A673 (cell line): ENCODE measurements at regions of chr17 and their contacts with region 1.

Region 1: DNA sequence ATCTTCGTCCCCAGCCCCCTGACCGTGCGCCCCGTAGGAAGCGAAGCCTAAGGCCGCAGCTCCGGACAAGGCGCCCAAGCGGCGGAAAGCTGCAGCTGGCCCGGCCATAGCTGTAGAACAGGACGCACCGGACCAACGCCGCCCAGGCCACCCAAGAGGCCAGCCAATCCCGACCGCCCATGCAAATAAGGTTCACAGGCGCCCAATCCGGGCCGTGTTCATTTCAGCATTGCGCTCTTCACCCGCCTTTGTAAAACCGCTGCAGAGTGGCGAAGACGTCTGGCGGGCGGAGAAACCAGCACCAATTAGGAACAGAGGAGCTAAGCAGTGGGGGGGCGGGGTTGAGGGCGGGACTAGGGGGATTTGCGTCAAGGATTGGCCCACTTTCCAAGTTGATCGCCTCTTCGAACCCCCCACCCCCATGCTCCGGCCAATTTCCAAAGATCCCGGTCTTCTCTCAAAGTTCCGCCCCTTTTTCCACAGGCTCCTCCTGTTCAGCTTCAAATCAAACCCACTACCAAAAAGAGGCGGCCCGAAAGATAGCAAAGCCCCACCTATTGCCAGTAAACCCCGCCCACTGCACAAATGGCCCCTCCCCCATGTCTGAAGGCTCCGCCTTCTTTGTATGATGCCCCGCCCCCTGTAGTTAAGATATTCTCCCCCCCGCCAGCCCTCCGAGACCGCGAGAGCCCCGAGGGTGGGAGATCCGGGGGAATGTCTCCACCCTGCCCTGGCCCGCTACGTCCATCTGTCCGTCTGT is at the start of gene TMEM256:
- DNase-seq: peak; percentile 100
- H3K4me3 ChIP-seq: peak within 1 kb of the TSS; percentile 61
- H3K27ac ChIP-seq: peak within 1 kb of the TSS; percentile 87
- H3K4me1 ChIP-seq: peaks cover 17% of the 10 kb centered on the region
- H3K27me3 ChIP-seq: no peaks in the 10 kb centered on the region
- CTCF ChIP-seq: no peak
- total RNA-seq, gene TMEM256: 57.6 and 91.6 TPM in 2 replicates

Region 2: DNA sequence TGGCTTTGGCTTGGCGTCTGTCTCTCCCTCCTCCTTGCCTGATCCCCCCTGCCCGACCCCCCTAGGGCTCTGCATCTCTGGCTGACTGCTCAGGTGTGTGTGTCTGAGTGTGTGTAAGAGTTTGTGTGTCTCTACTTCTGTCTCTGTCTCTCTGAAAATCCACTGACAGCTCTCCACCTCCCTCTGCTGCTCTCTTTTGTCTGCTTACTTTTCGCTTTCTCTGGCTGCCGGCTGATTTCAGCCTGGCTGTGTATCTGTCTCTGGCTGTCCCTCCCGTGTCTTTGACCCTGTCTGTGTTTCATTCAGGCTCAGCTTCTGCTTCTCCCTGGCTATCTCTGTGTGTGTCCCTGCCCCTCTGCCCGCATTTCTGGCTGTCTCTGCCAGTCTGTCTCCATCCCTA is 12.2 kb after region 1 on chr17:
- CTCF ChIA-PET with region 1: no interaction called
- POLR2A ChIA-PET with region 1: no interaction called
- intact Hi-C with region 1: no loop called
- DNase-seq: no peak
- H3K4me3 ChIP-seq: no peak overlapping the region
- H3K27ac ChIP-seq: no peak overlapping the region
- H3K4me1 ChIP-seq: no peaks in the 10 kb centered on the region
- H3K27me3 ChIP-seq: no peaks in the 10 kb centered on the region
- CTCF ChIP-seq: no peak

Region 3: DNA sequence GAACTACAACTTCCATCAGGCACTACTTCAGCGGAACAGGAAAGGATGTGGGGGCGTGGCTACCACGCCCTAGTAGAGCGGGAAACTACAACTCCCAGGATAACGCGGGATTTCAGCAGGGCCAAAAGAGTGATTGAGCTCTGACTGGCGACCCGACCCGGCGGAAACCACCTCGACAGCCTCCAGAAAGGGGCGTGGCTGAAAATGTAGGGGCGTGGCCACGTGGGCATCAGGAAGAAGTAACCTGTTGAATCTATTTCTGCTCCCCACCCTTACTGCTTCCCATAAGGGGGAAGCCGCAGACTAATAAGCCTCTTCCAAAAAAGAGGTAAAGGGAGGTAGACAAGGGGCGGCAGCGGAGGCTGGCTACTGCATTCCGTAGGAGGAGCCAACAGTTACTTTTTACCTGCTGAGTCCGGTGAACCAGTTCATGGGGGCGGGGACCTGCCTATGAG is 31.1 kb after region 1 on chr17 and contains the start of gene TMEM102:
- CTCF ChIA-PET with region 1: interaction called, 7 read pairs
- POLR2A ChIA-PET with region 1: interaction called, 5 read pairs
- intact Hi-C with region 1: loop called (anchors 1 kb)
- DNase-seq: peak; percentile 99
- H3K4me3 ChIP-seq: peak within 1 kb of the TSS; percentile 90
- H3K27ac ChIP-seq: peak within 1 kb of the TSS; percentile 41
- H3K4me1 ChIP-seq: peaks cover 30% of the 10 kb centered on the region
- H3K27me3 ChIP-seq: no peaks in the 10 kb centered on the region
- CTCF ChIP-seq: no peak
- total RNA-seq, gene TMEM102: 3.2 and 4.7 TPM in 2 replicates